ENCODE measurements at regions of chr15 and their contacts with region 1.

Region 1: DNA sequence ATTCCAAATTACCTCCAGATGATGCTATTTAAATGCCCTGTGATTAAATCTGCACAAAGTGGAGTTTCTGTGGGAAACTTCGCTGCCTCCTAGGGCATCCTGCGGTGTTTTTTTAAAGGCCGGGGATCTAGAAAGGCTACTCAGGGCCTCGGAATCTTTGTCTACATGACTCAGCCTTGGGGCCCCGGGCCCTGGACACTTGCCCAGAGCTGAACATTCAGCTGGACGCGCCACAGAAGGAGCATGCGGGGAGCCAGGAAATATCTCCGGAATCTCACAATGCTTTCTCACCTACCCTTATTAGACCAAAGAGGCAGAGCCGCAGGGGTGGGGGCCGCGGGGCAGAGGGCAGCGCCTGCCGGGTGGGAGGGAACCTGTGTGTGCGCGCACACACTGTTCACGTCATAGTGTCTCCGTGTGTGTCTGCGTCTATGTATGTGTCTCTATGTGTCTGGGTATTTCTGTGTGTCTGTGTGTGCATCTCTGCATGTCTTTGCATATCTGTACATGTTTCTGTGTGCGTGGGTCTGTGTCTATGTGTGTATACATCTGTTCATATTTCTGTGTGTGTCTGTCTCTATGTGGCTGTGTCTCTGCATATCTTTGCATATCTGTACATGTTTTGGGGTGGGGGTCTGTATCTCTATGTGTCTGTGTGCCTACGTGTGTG is 145.4 kb upstream of the TPM1 start:
- DNase-seq: peak; percentile 96

Region 2: DNA sequence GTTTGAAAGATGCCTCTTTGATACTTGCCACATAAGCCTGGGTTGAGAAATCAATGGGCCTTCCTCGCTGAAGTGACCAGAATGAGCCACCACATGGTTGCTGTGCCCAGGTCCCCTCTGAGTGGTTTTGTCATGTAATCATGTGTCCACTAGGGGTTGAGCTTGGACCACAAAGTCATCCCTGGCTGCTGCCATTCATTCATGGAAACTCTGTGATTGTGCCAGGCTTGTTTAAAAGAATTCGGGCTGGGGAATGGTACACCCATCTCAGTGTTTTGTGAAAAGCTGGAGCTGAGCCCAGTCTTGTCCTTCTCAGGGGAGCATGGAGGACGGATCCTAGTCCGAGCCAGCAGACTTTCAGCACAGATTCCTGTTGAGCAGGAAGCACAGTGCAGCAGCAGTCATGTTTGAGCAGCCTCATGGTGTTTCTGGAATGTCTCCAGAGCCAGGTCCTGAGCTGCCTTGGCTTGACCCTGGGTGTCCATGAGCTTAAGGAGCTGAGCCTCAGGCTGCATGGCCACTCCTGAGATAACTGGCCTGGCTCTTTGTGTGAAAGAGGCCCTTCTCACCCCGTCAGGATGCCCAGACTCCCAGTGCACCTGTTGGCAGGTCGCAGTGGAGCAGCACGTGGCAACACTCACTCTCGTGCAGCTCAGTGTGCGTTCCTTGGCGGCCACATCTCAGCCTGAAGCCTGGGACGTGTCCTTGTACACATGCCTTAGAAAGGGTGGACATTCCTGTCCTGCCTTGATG is 114.9 kb before region 1 on chr15:
- intact Hi-C with region 1: loop called (anchors 2 kb)
- DNase-seq: peak; percentile 80

Region 3: GRCh38 chr15:62940755-62941361 is 43.7 kb after region 1 on chr15:
- intact Hi-C with region 1: loop called (anchors 5 kb)
- DNase-seq: peak; percentile 78

Region 4: GRCh38 chr15:62957130-62957529 is 60.0 kb after region 1 on chr15:
- intact Hi-C with region 1: loop called (anchors 2 kb)
- DNase-seq: no peak